PC-9 (cell line): ENCODE measurements at regions of chr12 and their contacts with region 1.

Region 1: GRCh38 chr12:49664591-49665239 is 41.4 kb downstream of the PRPF40B start:
- DNase-seq: no peak
- H3K4me3 ChIP-seq: no peak overlapping the region
- H3K27ac ChIP-seq: no peak overlapping the region
- H3K4me1 ChIP-seq: no peaks in the 10 kb centered on the region
- H3K27me3 ChIP-seq: no peaks in the 10 kb centered on the region
- CTCF ChIP-seq: no peak

Region 2: GRCh38 chr12:49170924-49171323 is 493.8 kb before region 1 on chr12:
- CTCF ChIA-PET with region 1: no interaction called
- POLR2A ChIA-PET with region 1: interaction called, 15 read pairs
- intact Hi-C with region 1: no loop called
- DNase-seq: no peak
- H3K4me3 ChIP-seq: no peak overlapping the region
- H3K27ac ChIP-seq: no peak overlapping the region
- H3K4me1 ChIP-seq: no peaks in the 10 kb centered on the region
- H3K27me3 ChIP-seq: no peaks in the 10 kb centered on the region
- CTCF ChIP-seq: no peak

Region 3: GRCh38 chr12:49716553-49716952 is 51.8 kb after region 1 on chr12:
- CTCF ChIA-PET with region 1: no interaction called
- POLR2A ChIA-PET with region 1: no interaction called
- intact Hi-C with region 1: no loop called
- DNase-seq: no peak
- H3K4me3 ChIP-seq: no peak overlapping the region
- H3K27ac ChIP-seq: no peak overlapping the region
- H3K4me1 ChIP-seq: no peaks in the 10 kb centered on the region
- H3K27me3 ChIP-seq: peaks cover 34% of the 10 kb centered on the region; the same call in 1 of the 2 replicates
- CTCF ChIP-seq: no peak